ENCODE measurements at regions of chr11 and their contacts with region 1.

Region 1: GRCh38 chr11:65225279-65226102 is 36.3 kb upstream of the POLA2 start:
- DNase-seq: peak; percentile 73
- ATAC-seq: peak; percentile 87
- H3K4me3 Mint-ChIP-seq: peak overlapping the region; percentile 81
- H3K27ac Mint-ChIP-seq: peak overlapping the region; percentile 53
- H3K4me1 Mint-ChIP-seq: peaks cover 19% of the 10 kb centered on the region
- H3K27me3 Mint-ChIP-seq: no peaks in the 10 kb centered on the region; the same call in 1 of the 2 replicates
- CTCF ChIP-seq: no peak

Region 2: DNA sequence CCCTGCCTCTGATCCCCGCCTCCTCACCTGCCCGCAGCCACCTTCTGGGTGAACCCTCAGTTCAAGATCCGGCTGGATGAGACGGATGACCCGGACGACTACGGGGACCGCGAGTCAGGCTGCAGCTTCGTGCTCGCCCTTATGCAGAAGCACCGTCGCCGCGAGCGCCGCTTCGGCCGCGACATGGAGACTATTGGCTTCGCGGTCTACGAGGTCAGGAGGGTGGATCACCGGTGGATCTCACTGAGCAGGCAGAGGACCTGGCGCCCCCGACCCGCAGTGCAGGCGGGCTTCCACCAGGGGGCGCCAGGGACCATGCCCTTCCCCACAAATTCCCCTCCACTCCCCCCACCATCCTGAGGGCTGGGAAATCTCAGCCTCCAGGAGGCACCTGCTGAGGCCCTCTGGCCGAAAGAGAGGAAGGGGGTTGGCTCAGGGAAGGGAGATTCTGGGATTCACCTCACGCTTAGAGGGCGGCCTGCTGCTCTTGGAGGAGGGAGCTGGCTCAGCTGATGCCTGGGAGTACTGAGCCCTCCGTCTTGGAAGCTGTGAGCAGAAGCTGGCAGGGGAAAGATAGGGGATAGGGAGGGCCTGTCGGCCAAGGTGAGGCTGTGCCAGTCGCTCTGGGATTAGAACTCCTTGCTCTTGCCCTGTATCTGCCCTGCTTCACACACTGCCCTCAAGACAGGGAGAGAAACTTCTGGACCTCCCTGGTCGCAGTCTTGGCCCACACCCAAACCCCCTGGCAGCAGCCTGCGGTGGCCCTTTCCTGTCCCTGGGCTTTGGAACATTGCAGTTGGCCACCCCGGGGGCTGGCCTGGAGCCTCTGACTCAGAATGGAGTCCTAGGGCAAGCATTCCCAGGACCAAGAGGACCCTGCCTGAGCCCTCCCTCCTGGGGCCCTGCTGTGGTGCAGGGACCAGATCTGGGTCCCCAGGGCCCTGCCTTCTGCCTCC is 20.6 kb before region 1 on chr11:
- CTCF ChIA-PET with region 1: interaction called, 24 read pairs
- POLR2A ChIA-PET with region 1: interaction called, 5 read pairs
- DNase-seq: peak; percentile 88
- ATAC-seq: peak; percentile 93
- H3K4me3 Mint-ChIP-seq: peak overlapping the region; percentile 60
- H3K27ac Mint-ChIP-seq: peak overlapping the region; percentile 93
- H3K4me1 Mint-ChIP-seq: peaks cover 16% of the 10 kb centered on the region
- H3K27me3 Mint-ChIP-seq: no peaks in the 10 kb centered on the region
- CTCF ChIP-seq: peak; percentile 99

Region 3: DNA sequence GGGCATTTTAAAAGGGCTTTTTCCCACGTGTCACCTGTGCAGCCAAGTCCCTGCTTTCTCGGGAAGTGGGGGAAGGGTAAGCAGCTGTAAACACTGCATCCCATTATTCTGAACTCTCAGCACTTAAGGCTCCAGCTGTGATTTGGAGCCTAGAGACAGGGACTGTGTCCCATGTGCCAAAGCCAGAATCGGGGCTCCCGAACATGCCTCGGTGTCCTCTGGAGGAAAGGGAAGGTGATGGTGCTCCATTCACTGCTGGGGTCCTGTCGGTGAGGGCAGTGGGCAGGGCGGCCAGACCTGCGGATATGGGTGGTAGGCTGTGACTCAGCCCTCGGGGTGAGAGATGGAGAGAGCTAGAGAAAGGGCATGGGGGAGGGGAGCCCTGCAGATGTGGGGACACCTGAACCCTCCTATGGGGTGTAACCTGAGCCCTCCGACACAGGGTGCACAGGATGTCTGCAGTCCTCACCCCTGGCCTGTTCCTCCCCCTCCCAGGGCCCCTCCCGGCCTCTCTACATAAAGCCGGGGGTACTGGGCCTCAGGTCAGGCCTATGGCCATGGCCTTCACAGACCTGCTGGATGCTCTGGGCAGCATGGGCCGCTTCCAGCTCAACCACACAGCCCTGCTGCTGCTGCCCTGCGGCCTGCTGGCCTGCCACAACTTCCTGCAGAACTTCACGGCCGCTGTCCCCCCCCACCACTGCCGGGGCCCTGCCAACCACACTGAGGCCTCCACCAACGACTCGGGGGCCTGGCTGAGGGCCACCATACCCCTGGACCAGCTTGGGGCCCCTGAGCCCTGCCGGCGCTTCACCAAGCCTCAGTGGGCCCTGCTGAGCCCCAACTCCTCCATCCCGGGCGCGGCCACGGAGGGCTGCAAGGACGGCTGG is 11.9 kb before region 1 on chr11:
- CTCF ChIA-PET with region 1: interaction called, 46 read pairs
- POLR2A ChIA-PET with region 1: interaction called, 7 read pairs
- DNase-seq: peak; percentile 84
- ATAC-seq: peak; percentile 85
- H3K4me3 Mint-ChIP-seq: peak overlapping the region; percentile 58
- H3K27ac Mint-ChIP-seq: peak overlapping the region; percentile 100
- H3K4me1 Mint-ChIP-seq: peaks cover 42% of the 10 kb centered on the region
- H3K27me3 Mint-ChIP-seq: no peaks in the 10 kb centered on the region
- CTCF ChIP-seq: no peak

Region 4: DNA sequence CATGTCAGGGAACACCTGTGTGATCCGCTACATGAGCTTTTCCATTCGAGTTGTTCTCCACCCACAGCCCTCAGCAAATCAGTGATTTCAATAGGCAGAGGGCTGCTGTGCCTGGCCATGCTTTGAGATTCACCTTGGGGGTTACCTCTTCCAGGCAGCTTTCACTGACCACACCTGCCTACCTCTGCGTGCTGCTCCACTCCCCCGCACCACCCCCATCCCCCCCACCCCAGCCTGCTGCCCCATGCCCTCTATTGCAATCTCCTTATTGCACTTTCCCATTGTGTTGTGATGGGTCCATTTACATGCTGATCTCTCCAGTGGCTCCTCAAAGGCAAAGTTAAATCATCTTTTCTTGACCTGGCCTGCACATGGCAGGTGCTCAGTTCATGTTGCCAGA is 18.3 kb after region 1 on chr11:
- CTCF ChIA-PET with region 1: interaction called, 138 read pairs
- POLR2A ChIA-PET with region 1: interaction called, 7 read pairs
- DNase-seq: no peak
- ATAC-seq: peak; percentile 81
- H3K4me3 Mint-ChIP-seq: no peak overlapping the region
- H3K27ac Mint-ChIP-seq: peak overlapping the region; percentile 76
- H3K4me1 Mint-ChIP-seq: peaks cover 20% of the 10 kb centered on the region
- H3K27me3 Mint-ChIP-seq: no peaks in the 10 kb centered on the region
- CTCF ChIP-seq: no peak

Region 5: GRCh38 chr11:65261591-65262380 is 36.3 kb after region 1 on chr11 and contains the start of gene POLA2:
- CTCF ChIA-PET with region 1: interaction called, 13 read pairs
- POLR2A ChIA-PET with region 1: no interaction called
- DNase-seq: peak; percentile 88
- ATAC-seq: peak; percentile 92
- H3K4me3 Mint-ChIP-seq: peak within 1 kb of the TSS; percentile 92
- H3K27ac Mint-ChIP-seq: peak within 1 kb of the TSS; percentile 69
- H3K4me1 Mint-ChIP-seq: peaks cover 18% of the 10 kb centered on the region
- H3K27me3 Mint-ChIP-seq: peaks cover 13% of the 10 kb centered on the region
- CTCF ChIP-seq: no peak
- total RNA-seq, gene POLA2: 26.9 to 35.6 TPM (median 28.5 TPM) in 3 replicates